ENCODE measurements at regions of chr9 and their contacts with region 1.

Region 1: GRCh38 chr9:109918339-109919163 is 138.6 kb downstream of the PALM2AKAP2 start:
- DNase-seq: peak; percentile 85
- H3K4me3 Mint-ChIP-seq: peak overlapping the region; percentile 85
- H3K27ac Mint-ChIP-seq: peak overlapping the region; percentile 97
- H3K4me1 Mint-ChIP-seq: peaks cover 50% of the 10 kb centered on the region
- H3K27me3 Mint-ChIP-seq: no peaks in the 10 kb centered on the region

Region 2: DNA sequence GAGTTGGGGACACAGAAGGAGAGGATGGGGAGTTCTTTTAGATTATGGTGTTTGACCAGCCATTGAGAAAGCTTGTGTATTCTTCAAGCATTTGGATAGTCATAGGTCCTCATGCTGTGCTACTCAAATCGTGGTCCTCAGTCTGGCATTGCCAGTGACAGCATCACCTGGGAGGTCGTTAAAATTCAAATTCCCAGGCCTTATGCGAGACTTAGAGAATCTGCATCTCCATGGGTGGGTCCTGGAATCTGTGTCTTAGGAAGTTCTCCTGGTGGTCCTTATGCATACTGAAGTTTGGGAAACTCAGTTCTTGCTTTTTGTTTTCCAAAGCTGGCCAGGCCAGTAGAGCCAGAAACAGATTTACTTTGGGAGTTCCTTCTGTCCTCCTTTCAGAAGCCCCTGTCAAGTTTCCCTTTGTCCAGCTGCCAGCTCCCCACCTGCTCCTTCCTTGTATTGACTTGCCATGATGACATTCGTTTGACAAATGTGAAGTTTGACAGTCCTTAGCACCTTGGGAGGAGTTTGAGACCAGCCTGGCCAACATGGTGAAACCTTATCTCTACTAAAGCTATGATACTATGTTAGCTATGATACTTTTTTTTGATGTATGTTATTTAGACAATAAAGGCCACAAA is 42.9 kb before region 1 on chr9:
- intact Hi-C with region 1: no loop called
- DNase-seq: no peak
- H3K4me3 Mint-ChIP-seq: no peak overlapping the region
- H3K27ac Mint-ChIP-seq: no peak overlapping the region
- H3K4me1 Mint-ChIP-seq: peaks cover 12% of the 10 kb centered on the region
- H3K27me3 Mint-ChIP-seq: peaks cover 20% of the 10 kb centered on the region

Region 3: GRCh38 chr9:109887079-109887478 is 31.5 kb before region 1 on chr9:
- intact Hi-C with region 1: loop called (anchors 1 kb)
- DNase-seq: no peak
- H3K4me3 Mint-ChIP-seq: peak overlapping the region; percentile 75
- H3K27ac Mint-ChIP-seq: peak overlapping the region; percentile 94
- H3K4me1 Mint-ChIP-seq: peaks cover 69% of the 10 kb centered on the region
- H3K27me3 Mint-ChIP-seq: no peaks in the 10 kb centered on the region

Region 4: GRCh38 chr9:109903515-109904138 is 14.9 kb before region 1 on chr9:
- intact Hi-C with region 1: loop called (anchors 1 kb)
- DNase-seq: peak; percentile 90
- H3K4me3 Mint-ChIP-seq: no peak overlapping the region
- H3K27ac Mint-ChIP-seq: peak overlapping the region; percentile 23
- H3K4me1 Mint-ChIP-seq: peaks cover 36% of the 10 kb centered on the region
- H3K27me3 Mint-ChIP-seq: no peaks in the 10 kb centered on the region

Region 5: GRCh38 chr9:109950710-109951443 is 32.3 kb after region 1 on chr9:
- intact Hi-C with region 1: loop called (anchors 1 kb)
- DNase-seq: peak; percentile 72
- H3K4me3 Mint-ChIP-seq: peak overlapping the region; percentile 65
- H3K27ac Mint-ChIP-seq: peak overlapping the region; percentile 93
- H3K4me1 Mint-ChIP-seq: peaks cover 33% of the 10 kb centered on the region
- H3K27me3 Mint-ChIP-seq: no peaks in the 10 kb centered on the region

Measured in activated CD4-positive, alpha-beta T cell treated with anti-CD3 and anti-CD28 coated beads, Interleukin-2, amount 10 ng/mL, durations not matched to agents 24 days and 14 days (primary cell).